CD4-positive, alpha-beta memory T cell (primary cell): ENCODE measurements at regions of chr4 and their contacts with region 1.

Region 1: GRCh38 chr4:54064295-54065111 is at the start of gene CHIC2:
- DNase-seq: peak; percentile 96 to 99 (median 98)
- H3K4me3 ChIP-seq: peak within 1 kb of the TSS; percentile 87 to 88
- H3K4me3 Mint-ChIP-seq: peak within 1 kb of the TSS; percentile 90 to 99 (median 96)
- H3K27ac ChIP-seq: peak within 1 kb of the TSS; percentile 98
- H3K27ac Mint-ChIP-seq: peak within 1 kb of the TSS; percentile 94 to 99 (median 98)
- H3K4me1 ChIP-seq: peaks cover 47% of the 10 kb centered on the region
- H3K4me1 Mint-ChIP-seq: peaks cover 35 to 62% (median 45%) of the 10 kb centered on the region in 4 donors
- H3K27me3 ChIP-seq: no peaks in the 10 kb centered on the region
- H3K27me3 Mint-ChIP-seq: no peaks in the 10 kb centered on the region
- total RNA-seq, gene CHIC2: 45.3 to 46.6 TPM

Region 2: DNA sequence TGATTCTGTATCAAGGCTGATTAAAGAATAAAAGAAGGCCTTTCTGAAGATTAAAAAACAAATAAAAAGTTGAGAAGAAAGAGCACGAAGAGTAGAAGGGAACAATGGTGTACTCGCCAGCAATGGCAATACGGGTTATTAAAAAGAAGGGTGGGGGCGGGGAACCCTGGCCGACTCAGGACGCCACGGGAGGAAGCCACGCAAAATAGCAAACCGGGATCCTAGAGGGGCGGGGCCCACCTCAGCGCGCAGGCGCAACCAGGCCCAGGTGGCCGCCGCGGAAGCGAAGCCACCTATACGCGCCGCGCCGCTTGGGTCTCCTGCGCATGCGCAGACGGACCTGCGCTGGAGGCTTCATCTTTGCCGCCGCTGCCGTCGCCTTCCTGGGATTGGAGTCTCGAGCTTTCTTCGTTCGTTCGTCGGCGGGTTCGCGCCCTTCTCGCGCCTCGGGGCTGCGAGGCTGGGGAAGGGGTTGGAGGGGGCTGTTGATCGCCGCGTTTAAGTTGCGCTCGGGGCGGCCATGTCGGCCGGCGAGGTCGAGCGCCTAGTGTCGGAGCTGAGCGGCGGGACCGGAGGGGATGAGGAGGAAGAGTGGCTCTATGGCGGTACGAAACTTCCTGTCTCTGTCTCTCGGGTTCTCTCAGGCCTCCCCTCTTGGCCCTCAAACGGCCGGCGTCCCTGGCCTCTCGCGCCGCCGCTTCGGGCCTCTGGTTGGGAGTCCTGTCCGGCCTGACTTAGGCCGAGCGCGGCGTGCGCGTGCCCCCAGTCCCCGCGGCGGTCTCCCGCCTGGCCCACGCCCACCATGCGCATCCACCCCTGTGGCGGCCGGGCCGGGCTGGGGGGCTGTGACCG is 687.0 kb before region 1 on chr4 and contains the start of gene FIP1L1:
- CTCF ChIA-PET with region 1: no interaction called
- POLR2A ChIA-PET with region 1: no interaction called
- intact Hi-C with region 1: loop called (anchors 1 kb)
- DNase-seq: peak; percentile 93 to 97 (median 95)
- H3K4me3 ChIP-seq: peak within 1 kb of the TSS; percentile 71 to 89
- H3K4me3 Mint-ChIP-seq: peak within 1 kb of the TSS; percentile 98 to 100 (median 99)
- H3K27ac ChIP-seq: peak within 1 kb of the TSS; percentile 92
- H3K27ac Mint-ChIP-seq: peak within 1 kb of the TSS; percentile 97 to 100 (median 99)
- H3K4me1 ChIP-seq: peaks cover 37% of the 10 kb centered on the region
- H3K4me1 Mint-ChIP-seq: peaks cover 19 to 53% (median 34%) of the 10 kb centered on the region in 4 donors
- H3K27me3 ChIP-seq: no peaks in the 10 kb centered on the region
- H3K27me3 Mint-ChIP-seq: no peaks in the 10 kb centered on the region
- total RNA-seq, gene FIP1L1: 73.0 to 90.7 TPM

Region 3: GRCh38 chr4:54015423-54016030 is 49.0 kb before region 1 on chr4:
- CTCF ChIA-PET with region 1: no interaction called
- POLR2A ChIA-PET with region 1: interaction called, 3 read pairs
- intact Hi-C with region 1: loop called (anchors 5 kb)
- DNase-seq: no peak
- H3K4me3 ChIP-seq: no peak overlapping the region
- H3K4me3 Mint-ChIP-seq: no peak overlapping the region
- H3K27ac ChIP-seq: no peak overlapping the region
- H3K27ac Mint-ChIP-seq: peak overlapping the region in 1 of 7 donors; percentile 41
- H3K4me1 ChIP-seq: no peaks in the 10 kb centered on the region
- H3K4me1 Mint-ChIP-seq: peaks cover 13 to 23% (median 17%) of the 10 kb centered on the region in 4 donors
- H3K27me3 ChIP-seq: no peaks in the 10 kb centered on the region
- H3K27me3 Mint-ChIP-seq: no peaks in the 10 kb centered on the region

Region 4: GRCh38 chr4:54054501-54054900 is 10.0 kb before region 1 on chr4:
- CTCF ChIA-PET with region 1: no interaction called
- POLR2A ChIA-PET with region 1: interaction called, 12 read pairs
- intact Hi-C with region 1: no loop called
- DNase-seq: no peak
- H3K4me3 ChIP-seq: no peak overlapping the region
- H3K4me3 Mint-ChIP-seq: peak overlapping the region in 2 of 8 donors; percentile 3 to 25
- H3K27ac ChIP-seq: no peak overlapping the region
- H3K27ac Mint-ChIP-seq: no peak overlapping the region
- H3K4me1 ChIP-seq: peaks cover 68% of the 10 kb centered on the region
- H3K4me1 Mint-ChIP-seq: peaks cover 52 to 79% (median 63%) of the 10 kb centered on the region in 4 donors
- H3K27me3 ChIP-seq: no peaks in the 10 kb centered on the region
- H3K27me3 Mint-ChIP-seq: no peaks in the 10 kb centered on the region

Region 5: GRCh38 chr4:54091637-54092404 is 27.3 kb after region 1 on chr4:
- CTCF ChIA-PET with region 1: no interaction called
- POLR2A ChIA-PET with region 1: interaction called, 13 read pairs
- intact Hi-C with region 1: loop called (anchors 1 kb)
- DNase-seq: peak; percentile 80 to 84 (median 83)
- H3K4me3 ChIP-seq: peak overlapping the region; percentile 60 to 68
- H3K4me3 Mint-ChIP-seq: peak overlapping the region; percentile 86 to 95 (median 90)
- H3K27ac ChIP-seq: no peak overlapping the region
- H3K27ac Mint-ChIP-seq: peak overlapping the region; percentile 1 to 84 (median 66)
- H3K4me1 ChIP-seq: peaks cover 29% of the 10 kb centered on the region
- H3K4me1 Mint-ChIP-seq: peaks cover 7 to 41% (median 21%) of the 10 kb centered on the region in 4 donors
- H3K27me3 ChIP-seq: peaks cover 46% of the 10 kb centered on the region
- H3K27me3 Mint-ChIP-seq: peaks cover 44 to 46% of the 10 kb centered on the region in 2 donors

Region 6: GRCh38 chr4:54118850-54119589 is 54.5 kb after region 1 on chr4:
- CTCF ChIA-PET with region 1: no interaction called
- POLR2A ChIA-PET with region 1: no interaction called
- intact Hi-C with region 1: no loop called
- DNase-seq: no peak
- H3K4me3 ChIP-seq: no peak overlapping the region
- H3K4me3 Mint-ChIP-seq: no peak overlapping the region
- H3K27ac ChIP-seq: no peak overlapping the region
- H3K27ac Mint-ChIP-seq: no peak overlapping the region
- H3K4me1 ChIP-seq: no peaks in the 10 kb centered on the region
- H3K4me1 Mint-ChIP-seq: no peaks in the 10 kb centered on the region
- H3K27me3 ChIP-seq: peaks cover 4% of the 10 kb centered on the region
- H3K27me3 Mint-ChIP-seq: peaks cover 14 to 20% of the 10 kb centered on the region in 2 donors

Region 7: DNA sequence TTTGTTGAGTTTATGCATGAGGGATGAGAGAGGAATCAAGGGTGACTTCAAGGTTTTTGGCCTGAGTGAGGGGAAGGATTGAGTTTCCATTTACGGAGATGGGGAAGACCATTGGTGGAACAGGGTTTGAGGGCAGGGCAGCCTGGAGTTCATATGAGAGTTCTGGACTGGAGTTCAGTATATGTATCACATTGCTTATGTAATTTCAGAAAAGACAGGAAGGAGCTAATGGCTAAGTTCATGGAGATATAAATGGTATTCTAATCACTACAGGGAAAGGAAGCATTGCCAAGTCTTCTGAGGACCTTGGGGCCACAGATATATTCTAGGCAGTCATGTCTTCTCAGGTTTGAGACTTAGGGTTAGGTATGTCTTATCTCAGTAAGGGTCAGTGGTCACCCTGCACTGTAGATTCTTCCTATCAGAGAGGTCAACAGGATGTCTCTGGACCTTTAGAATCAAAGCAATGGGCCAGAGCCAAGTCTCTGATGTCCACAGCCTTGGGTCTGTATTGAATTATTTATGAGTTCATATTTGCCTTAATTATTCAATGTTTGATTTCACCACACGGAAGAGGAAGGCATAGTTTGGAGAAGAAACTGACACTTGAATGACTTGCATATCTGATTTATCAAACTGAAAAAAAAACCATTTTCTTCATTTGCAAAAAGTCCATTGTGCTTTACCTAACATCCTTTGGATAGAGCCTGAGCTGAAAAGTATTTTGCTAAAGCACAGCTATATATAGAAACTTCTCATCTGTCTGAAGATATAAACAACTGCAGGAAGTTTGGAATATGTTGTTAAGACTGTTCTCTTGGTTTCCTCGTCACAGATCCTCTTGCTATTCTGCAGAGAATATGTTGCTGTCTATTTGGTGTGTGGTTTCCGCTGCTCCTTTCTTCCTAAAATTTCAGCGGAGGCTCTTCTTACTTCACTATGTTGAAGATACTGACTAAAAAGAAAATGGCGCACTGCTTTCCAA is 304.1 kb after region 1 on chr4:
- CTCF ChIA-PET with region 1: no interaction called
- POLR2A ChIA-PET with region 1: no interaction called
- intact Hi-C with region 1: no loop called
- DNase-seq: no peak
- H3K4me3 ChIP-seq: no peak overlapping the region
- H3K4me3 Mint-ChIP-seq: no peak overlapping the region
- H3K27ac ChIP-seq: no peak overlapping the region
- H3K27ac Mint-ChIP-seq: no peak overlapping the region
- H3K4me1 ChIP-seq: no peaks in the 10 kb centered on the region
- H3K4me1 Mint-ChIP-seq: no peaks in the 10 kb centered on the region
- H3K27me3 ChIP-seq: no peaks in the 10 kb centered on the region
- H3K27me3 Mint-ChIP-seq: peaks cover 1 to 6% of the 10 kb centered on the region in 2 donors